ENCODE measurements at regions of chr22 and their contacts with region 1.

Region 1: GRCh38 chr22:45934659-45935341 is 42.2 kb downstream of the WNT7B start:
- DNase-seq: no peak
- H3K4me3 ChIP-seq: no peak overlapping the region
- H3K4me1 ChIP-seq: no peaks in the 10 kb centered on the region
- H3K27me3 ChIP-seq: peaks cover 18% of the 10 kb centered on the region

Region 2: DNA sequence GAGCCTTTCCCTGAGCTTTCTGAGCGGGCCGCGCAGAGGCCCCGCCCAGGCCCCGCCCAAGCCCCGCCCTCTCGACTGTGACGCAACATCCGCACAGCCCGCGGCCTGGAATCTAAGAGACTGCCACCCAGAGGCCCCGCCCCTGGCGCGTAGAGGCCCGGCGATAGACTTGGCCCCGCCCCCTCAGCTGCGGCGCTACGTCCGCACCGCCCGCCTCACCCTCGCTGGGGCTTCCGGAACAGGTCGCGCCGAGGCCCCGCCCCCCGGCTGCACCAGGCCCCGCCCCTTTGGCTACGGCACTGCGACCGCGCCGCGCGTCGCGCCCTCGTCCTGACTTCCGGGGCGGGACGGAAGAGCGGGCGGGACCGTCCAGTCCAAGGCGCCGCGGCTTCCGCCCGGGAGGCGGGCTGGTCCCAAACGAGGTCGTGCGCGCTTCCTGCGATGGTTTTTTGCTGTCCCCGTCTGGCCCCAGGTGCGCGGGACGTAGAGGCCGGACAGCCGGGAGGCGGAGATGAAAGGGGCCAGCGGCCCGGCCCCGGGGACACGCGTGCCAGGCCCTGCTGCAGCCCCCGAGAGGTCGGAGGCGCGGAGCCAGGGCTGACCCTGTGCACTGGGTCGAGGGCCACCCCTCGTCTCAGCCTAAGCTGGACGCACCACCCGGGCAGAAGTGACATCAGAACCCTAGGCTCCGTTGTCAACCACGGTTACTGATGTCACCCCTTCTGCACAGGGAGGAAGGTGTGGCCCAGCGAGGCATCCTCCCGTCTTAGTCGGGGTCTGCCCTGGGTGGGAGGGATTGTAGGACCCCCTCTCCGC is 101.2 kb after region 1 on chr22:
- in situ Hi-C with region 1: loop called (anchors 25 kb)
- DNase-seq: peak; percentile 98 to 100
- H3K4me3 ChIP-seq: peak overlapping the region; percentile 89
- H3K4me1 ChIP-seq: peaks cover 42% of the 10 kb centered on the region
- H3K27me3 ChIP-seq: no peaks in the 10 kb centered on the region

Measured in HAP-1 (cell line).